CD8-positive, alpha-beta T cell (primary cell): ENCODE measurements at regions of chr7 and their contacts with region 1.

Region 1: GRCh38 chr7:105060437-105060836 is 46.4 kb downstream of the KMT2E start:
- DNase-seq: no peak
- ATAC-seq: no peak
- H3K4me3 ChIP-seq: no peak overlapping the region
- H3K4me3 Mint-ChIP-seq: no peak overlapping the region
- H3K27ac ChIP-seq: no peak overlapping the region
- H3K27ac Mint-ChIP-seq: peak overlapping the region; percentile 58
- H3K4me1 ChIP-seq: peaks cover 40% of the 10 kb centered on the region
- H3K4me1 Mint-ChIP-seq: peaks cover 75% of the 10 kb centered on the region
- H3K27me3 ChIP-seq: no peaks in the 10 kb centered on the region
- H3K27me3 Mint-ChIP-seq: no peaks in the 10 kb centered on the region
- CTCF ChIP-seq: no peak

Region 2: GRCh38 chr7:105046414-105046813 is 14.0 kb before region 1 on chr7:
- CTCF ChIA-PET with region 1: interaction called, 4 read pairs
- POLR2A ChIA-PET with region 1: no interaction called
- intact Hi-C with region 1: loop called in 1 of 2 experiments (anchors 2 kb)
- DNase-seq: no peak
- ATAC-seq: no peak
- H3K4me3 ChIP-seq: no peak overlapping the region
- H3K4me3 Mint-ChIP-seq: no peak overlapping the region
- H3K27ac ChIP-seq: no peak overlapping the region
- H3K27ac Mint-ChIP-seq: no peak overlapping the region
- H3K4me1 ChIP-seq: peaks cover 5% of the 10 kb centered on the region
- H3K4me1 Mint-ChIP-seq: peaks cover 67% of the 10 kb centered on the region
- H3K27me3 ChIP-seq: no peaks in the 10 kb centered on the region
- H3K27me3 Mint-ChIP-seq: no peaks in the 10 kb centered on the region
- CTCF ChIP-seq: no peak

Region 3: GRCh38 chr7:105098863-105099515 is 38.6 kb after region 1 on chr7:
- CTCF ChIA-PET with region 1: no interaction called
- POLR2A ChIA-PET with region 1: no interaction called
- intact Hi-C with region 1: loop called in 1 of 2 experiments (anchors 5 kb)
- DNase-seq: no peak
- ATAC-seq: no peak
- H3K4me3 ChIP-seq: no peak overlapping the region
- H3K4me3 Mint-ChIP-seq: no peak overlapping the region
- H3K27ac ChIP-seq: peak overlapping the region in 1 of 2 experiments; percentile 10
- H3K27ac Mint-ChIP-seq: no peak overlapping the region
- H3K4me1 ChIP-seq: no peaks in the 10 kb centered on the region
- H3K4me1 Mint-ChIP-seq: peaks cover 45% of the 10 kb centered on the region
- H3K27me3 ChIP-seq: no peaks in the 10 kb centered on the region
- H3K27me3 Mint-ChIP-seq: no peaks in the 10 kb centered on the region
- CTCF ChIP-seq: no peak

Region 4: DNA sequence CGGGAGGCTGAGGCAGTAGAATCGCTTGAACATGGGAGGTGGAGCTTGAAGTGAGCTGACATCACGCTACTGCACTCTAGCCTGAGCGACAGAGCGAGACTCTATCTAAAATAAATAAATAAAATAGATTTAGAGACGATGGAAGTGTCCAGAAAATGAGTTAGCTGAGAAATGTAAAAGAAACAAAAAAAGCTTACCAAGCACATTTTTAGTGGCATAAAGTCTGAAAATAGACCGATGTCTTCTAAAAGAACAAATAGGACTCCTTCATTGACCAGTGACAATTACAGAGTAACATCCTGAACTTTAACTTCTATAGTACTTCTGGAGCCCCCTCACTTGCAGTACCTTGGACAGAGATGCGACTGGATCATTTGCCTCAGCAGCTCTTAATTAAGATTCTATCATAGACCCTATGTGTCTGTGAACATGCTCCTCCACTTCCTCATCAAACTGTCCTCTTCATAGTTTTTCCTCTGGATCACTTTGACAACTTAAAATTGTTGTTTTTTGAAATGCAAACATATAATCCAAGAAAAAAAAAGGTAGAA is 353.5 kb after region 1 on chr7:
- CTCF ChIA-PET with region 1: no interaction called
- POLR2A ChIA-PET with region 1: no interaction called
- intact Hi-C with region 1: no loop called
- DNase-seq: no peak
- ATAC-seq: no peak
- H3K4me3 ChIP-seq: no peak overlapping the region
- H3K4me3 Mint-ChIP-seq: no peak overlapping the region
- H3K27ac ChIP-seq: no peak overlapping the region
- H3K27ac Mint-ChIP-seq: no peak overlapping the region
- H3K4me1 ChIP-seq: no peaks in the 10 kb centered on the region
- H3K4me1 Mint-ChIP-seq: no peaks in the 10 kb centered on the region
- H3K27me3 ChIP-seq: no peaks in the 10 kb centered on the region
- H3K27me3 Mint-ChIP-seq: no peaks in the 10 kb centered on the region
- CTCF ChIP-seq: no peak